Heart left ventricle (tissue), 16 donors: ENCODE measurements at regions of chr17 and their contacts with region 1.

Region 1: DNA sequence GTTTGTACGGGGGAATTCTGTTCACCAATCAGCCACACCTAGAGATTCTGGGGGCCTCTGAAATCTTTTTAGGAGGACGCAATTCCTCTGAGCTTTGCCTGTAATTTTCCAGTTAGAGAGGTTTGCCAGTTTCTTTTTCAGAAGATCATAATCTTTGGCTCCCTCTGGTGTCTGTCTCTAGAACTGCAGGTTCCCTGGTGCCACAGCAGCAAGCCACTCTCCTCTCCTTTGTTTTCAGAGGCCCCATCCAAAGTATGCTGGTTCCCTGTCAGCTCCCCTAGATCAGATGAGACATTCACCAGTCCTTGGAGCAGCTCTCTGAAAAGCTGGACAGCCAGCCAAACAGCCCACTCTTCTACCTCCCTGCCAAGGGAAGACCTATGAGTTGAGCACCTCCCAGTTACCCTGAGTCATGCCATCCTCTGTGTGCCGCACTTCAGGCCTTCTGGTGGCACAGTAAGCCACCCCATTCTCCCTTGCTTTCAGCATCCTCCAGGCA is 36.1 kb downstream of the RNF112 start:
- DNase-seq: peak in 4 of 5 donors; percentile 48 to 68 (median 62)
- ATAC-seq: peak; percentile 34 to 83 (median 82)
- H3K4me3 ChIP-seq: no peak overlapping the region
- H3K27ac ChIP-seq: peak overlapping the region in 4 of 12 donors; percentile 13 to 90 (median 37)
- H3K4me1 ChIP-seq: peaks cover 0 to 20% (median 0%) of the 10 kb centered on the region in 12 donors
- H3K27me3 ChIP-seq: no peaks in the 10 kb centered on the region
- CTCF ChIP-seq: peak; percentile 91 to 98 (median 94)
- POLR2A ChIP-seq: no peak

Region 2: DNA sequence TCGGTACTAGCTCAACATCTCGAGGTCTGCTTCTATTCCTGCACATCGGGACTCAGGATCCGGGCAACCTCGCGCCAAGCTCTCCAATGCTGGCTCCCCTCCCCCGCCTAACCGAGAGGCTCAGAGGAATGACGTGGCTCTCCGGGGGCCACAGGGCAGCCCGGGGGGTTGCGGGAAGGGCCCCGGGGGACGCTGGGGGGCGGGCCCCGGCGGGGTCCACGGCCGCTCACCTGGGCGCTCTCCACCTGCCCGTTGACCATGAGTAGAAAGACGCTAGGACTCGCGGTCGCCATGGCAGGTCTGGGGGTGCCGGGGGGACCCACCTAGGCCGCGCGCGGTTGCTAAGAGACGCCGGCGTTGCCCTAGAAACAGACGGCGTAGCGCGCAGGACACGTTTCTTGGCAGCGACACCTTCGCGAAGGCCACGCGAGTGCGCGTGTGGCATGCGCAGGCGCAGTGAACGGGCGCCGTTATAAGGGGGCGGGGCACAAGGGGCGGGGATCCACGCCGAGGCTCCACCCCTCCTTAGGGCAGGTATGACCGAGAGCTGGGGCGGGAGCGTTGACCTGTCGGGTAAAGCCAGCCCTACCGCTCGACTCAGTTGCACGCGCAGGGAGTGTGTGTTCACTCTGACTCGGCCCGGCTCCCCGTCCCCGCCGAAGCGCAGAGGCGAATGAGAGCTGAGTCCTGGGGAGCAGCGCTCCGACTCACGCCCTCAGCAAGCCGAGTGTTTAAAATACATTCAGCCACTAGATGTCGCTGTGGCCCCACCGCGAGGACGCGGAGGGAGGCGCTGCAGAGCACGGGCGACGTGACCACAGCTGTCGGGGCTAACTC is 84.6 kb before region 1 on chr17 and contains the start of gene B9D1:
- intact Hi-C with region 1: loop called (anchors 1 to 5 kb)
- DNase-seq: peak; percentile 90 to 97 (median 93)
- ATAC-seq: peak; percentile 93 to 97 (median 96)
- H3K4me3 ChIP-seq: peak within 1 kb of the TSS; percentile 58 to 87 (median 79)
- H3K27ac ChIP-seq: peak within 1 kb of the TSS in 11 of 12 donors; percentile 48 to 88 (median 75)
- H3K4me1 ChIP-seq: peaks cover 0 to 20% (median 12%) of the 10 kb centered on the region in 12 donors
- H3K27me3 ChIP-seq: peaks cover 0 to 2% (median 0%) of the 10 kb centered on the region in 9 donors
- CTCF ChIP-seq: peak; percentile 96 to 100 (median 98)
- POLR2A ChIP-seq: peak in 1 of 2 donors; percentile 50
- total RNA-seq, gene B9D1: 5.6 to 27.9 (median 10.8) TPM

Region 3: GRCh38 chr17:19377602-19378392 is 69.3 kb before region 1 on chr17:
- intact Hi-C with region 1: loop called in 1 of 10 experiments (anchors 5 kb)
- DNase-seq: peak in 4 of 5 donors; percentile 99
- ATAC-seq: peak; percentile 92 to 98 (median 96)
- H3K4me3 ChIP-seq: peak overlapping the region; percentile 39 to 97 (median 80)
- H3K27ac ChIP-seq: peak overlapping the region; percentile 71 to 99 (median 94)
- H3K4me1 ChIP-seq: peaks cover 0 to 30% (median 17%) of the 10 kb centered on the region in 12 donors
- H3K27me3 ChIP-seq: no peaks in the 10 kb centered on the region
- CTCF ChIP-seq: peak in 4 of 12 donors; percentile 5 to 33 (median 20)
- POLR2A ChIP-seq: peak in 1 of 2 donors; percentile 44

Region 4: GRCh38 chr17:19517699-19518098 is 70.6 kb after region 1 on chr17:
- intact Hi-C with region 1: no loop called
- DNase-seq: no peak
- ATAC-seq: no peak
- H3K4me3 ChIP-seq: no peak overlapping the region
- H3K27ac ChIP-seq: no peak overlapping the region
- H3K4me1 ChIP-seq: peaks cover 0 to 14% (median 8%) of the 10 kb centered on the region in 12 donors
- H3K27me3 ChIP-seq: no peaks in the 10 kb centered on the region
- CTCF ChIP-seq: no peak
- POLR2A ChIP-seq: no peak

Region 5: DNA sequence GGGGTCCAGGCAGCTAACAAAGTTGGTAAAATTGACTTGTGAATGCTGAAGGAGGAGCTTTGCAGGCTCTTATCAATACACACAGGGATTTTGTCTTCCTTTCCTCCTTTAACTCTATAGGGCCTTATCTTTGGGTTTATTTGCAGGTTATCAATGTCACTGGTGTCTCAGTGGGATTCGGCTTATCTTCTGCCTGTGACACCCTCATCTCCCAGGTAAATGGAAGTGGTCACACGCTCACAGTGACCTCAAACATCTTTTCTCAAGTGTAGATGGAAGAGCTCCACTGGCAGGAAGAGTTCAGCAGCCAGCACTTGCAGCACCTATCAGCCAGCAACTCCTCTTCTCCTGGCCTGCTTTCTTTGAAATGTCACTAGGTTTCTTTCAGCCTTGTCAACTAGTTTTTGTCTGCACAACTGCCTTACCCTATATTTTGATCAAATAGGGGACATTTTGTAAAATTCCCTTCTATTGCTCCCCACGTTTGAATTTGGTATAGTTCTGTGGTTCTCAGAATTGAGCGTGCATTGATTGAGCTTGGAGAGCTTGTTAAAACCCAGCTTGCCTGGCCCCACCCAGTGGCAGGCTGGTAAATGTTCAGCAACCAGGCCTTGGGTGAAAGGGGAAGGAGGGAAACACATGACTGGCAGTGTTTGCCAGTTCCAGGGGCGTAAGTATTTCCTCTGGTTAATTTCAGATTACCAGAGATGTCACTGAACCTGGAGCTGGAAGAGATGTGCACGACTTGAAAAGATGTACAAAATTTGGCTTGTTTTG is 99.3 kb after region 1 on chr17:
- intact Hi-C with region 1: no loop called
- DNase-seq: peak in 4 of 5 donors; percentile 26 to 68 (median 47)
- ATAC-seq: peak; percentile 56 to 83 (median 79)
- H3K4me3 ChIP-seq: no peak overlapping the region
- H3K27ac ChIP-seq: peak overlapping the region in 5 of 12 donors; percentile 29 to 71 (median 46)
- H3K4me1 ChIP-seq: peaks cover 0 to 30% (median 5%) of the 10 kb centered on the region in 12 donors
- H3K27me3 ChIP-seq: no peaks in the 10 kb centered on the region
- CTCF ChIP-seq: peak in 8 of 12 donors; percentile 11 to 43 (median 28)
- POLR2A ChIP-seq: no peak